Activated CD4-positive, alpha-beta T cell treated with anti-CD3 and anti-CD28 coated beads for 36 hours (primary cell): ENCODE measurements at regions of chr2 and their contacts with region 1.

Region 1: DNA sequence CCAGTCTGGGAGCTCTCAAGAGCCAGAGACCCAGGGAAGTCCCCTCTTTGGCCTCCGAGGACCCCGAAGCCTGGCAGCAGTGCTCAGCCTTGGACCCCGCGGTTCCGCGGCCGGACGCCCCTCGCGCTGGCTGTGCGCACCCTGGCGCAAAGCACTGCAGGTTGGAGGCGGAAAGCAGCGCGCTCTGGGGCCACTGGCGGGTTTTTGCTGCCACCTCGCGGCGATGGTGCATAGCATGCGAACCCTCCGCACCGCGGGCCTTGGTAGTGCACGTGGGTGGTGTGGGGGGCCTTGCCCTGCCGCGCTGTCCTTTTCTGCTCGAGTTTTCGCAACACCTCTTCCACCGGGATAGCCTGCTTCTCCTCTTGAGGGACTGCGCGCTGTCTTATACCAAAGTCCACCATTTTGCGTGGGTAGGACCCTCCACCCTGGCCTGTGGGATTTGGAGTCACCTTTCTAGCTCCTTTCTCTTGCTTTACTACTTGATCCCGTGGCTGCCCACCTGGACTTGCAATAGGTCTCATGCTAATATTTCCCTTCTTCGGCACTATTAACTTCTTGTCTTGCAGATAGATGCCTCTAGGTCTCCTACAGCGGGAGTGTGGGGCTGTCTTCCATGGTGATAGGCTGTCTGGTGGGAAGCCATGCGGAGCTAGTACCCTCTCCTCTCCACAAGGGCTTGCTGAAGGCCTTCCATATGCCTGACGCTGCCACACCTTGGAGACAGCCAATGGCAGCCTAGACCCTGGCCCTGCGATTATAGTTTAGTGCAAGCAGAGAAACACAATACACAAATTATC is 14.3 kb downstream of the SIX3 start:
- DNase-seq: peak; percentile 90
- ATAC-seq: peak; percentile 77
- H3K4me3 Mint-ChIP-seq: peak overlapping the region; percentile 54
- H3K27ac Mint-ChIP-seq: no peak overlapping the region
- H3K4me1 Mint-ChIP-seq: peaks cover 14% of the 10 kb centered on the region
- H3K27me3 Mint-ChIP-seq: peaks cover 51% of the 10 kb centered on the region

Region 2: GRCh38 chr2:44044281-44044720 is 911.5 kb before region 1 on chr2:
- CTCF ChIA-PET with region 1: interaction called, 11 read pairs
- POLR2A ChIA-PET with region 1: no interaction called
- intact Hi-C with region 1: loop called (anchors 1 to 5 kb)
- DNase-seq: peak; percentile 91
- ATAC-seq: peak; percentile 100
- H3K4me3 Mint-ChIP-seq: no peak overlapping the region
- H3K27ac Mint-ChIP-seq: no peak overlapping the region
- H3K4me1 Mint-ChIP-seq: no peaks in the 10 kb centered on the region
- H3K27me3 Mint-ChIP-seq: peaks cover 2% of the 10 kb centered on the region

Region 3: GRCh38 chr2:44244129-44244871 is 711.5 kb before region 1 on chr2:
- CTCF ChIA-PET with region 1: interaction called, 11 read pairs
- POLR2A ChIA-PET with region 1: no interaction called
- intact Hi-C with region 1: loop called (anchors 1 to 5 kb)
- DNase-seq: peak; percentile 73
- ATAC-seq: peak; percentile 86
- H3K4me3 Mint-ChIP-seq: peak overlapping the region; percentile 67
- H3K27ac Mint-ChIP-seq: peak overlapping the region; percentile 47
- H3K4me1 Mint-ChIP-seq: peaks cover 16% of the 10 kb centered on the region
- H3K27me3 Mint-ChIP-seq: no peaks in the 10 kb centered on the region

Region 4: GRCh38 chr2:44479122-44479887 is 476.5 kb before region 1 on chr2:
- CTCF ChIA-PET with region 1: interaction called, 93 read pairs
- POLR2A ChIA-PET with region 1: no interaction called
- intact Hi-C with region 1: loop called (anchors 1 kb)
- DNase-seq: peak; percentile 39
- ATAC-seq: peak; percentile 100
- H3K4me3 Mint-ChIP-seq: no peak overlapping the region
- H3K27ac Mint-ChIP-seq: no peak overlapping the region
- H3K4me1 Mint-ChIP-seq: peaks cover 9% of the 10 kb centered on the region
- H3K27me3 Mint-ChIP-seq: no peaks in the 10 kb centered on the region

Region 5: DNA sequence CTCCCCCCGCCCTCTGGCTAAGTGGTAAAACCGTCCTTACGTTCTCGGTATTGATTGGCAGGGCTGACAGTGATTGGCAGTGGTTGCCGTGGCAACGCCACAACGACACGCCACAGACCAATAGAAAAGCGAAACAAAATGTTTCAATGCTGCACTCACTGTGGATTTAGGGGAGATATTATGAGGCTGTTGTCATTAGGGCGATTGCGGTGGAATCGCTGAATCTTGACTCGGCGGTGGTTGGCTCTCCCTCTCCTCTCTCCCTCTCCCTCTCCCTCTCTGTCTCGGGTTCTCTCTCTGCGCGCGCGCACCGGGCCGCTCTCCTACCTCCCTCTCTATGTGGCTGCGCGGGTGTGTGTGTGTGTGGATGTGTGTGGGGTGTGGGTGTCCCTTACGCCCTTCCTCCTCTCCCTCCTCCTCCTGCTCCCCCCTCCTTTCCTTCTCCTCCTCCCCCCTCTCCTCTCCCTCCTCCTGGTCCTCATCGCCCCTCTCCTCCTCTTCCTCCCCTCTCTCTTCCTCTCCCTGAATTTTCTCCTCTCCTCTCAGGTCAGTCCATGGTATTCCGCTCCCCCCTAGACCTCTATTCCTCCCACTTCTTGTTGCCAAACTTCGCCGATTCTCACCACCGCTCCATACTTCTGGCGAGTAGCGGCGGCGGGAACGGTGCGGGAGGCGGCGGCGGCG is 14.1 kb before region 1 on chr2 and contains the start of gene SIX3:
- CTCF ChIA-PET with region 1: interaction called, 30 read pairs
- POLR2A ChIA-PET with region 1: no interaction called
- intact Hi-C with region 1: loop called in 1 of 2 experiments (anchors 1 kb)
- DNase-seq: peak; percentile 74
- ATAC-seq: peak; percentile 69
- H3K4me3 Mint-ChIP-seq: peak within 1 kb of the TSS; percentile 70
- H3K27ac Mint-ChIP-seq: no peak within 1 kb of the TSS
- H3K4me1 Mint-ChIP-seq: peaks cover 37% of the 10 kb centered on the region
- H3K27me3 Mint-ChIP-seq: peaks cover 76% of the 10 kb centered on the region
- total RNA-seq, gene SIX3: not detected

Region 6: DNA sequence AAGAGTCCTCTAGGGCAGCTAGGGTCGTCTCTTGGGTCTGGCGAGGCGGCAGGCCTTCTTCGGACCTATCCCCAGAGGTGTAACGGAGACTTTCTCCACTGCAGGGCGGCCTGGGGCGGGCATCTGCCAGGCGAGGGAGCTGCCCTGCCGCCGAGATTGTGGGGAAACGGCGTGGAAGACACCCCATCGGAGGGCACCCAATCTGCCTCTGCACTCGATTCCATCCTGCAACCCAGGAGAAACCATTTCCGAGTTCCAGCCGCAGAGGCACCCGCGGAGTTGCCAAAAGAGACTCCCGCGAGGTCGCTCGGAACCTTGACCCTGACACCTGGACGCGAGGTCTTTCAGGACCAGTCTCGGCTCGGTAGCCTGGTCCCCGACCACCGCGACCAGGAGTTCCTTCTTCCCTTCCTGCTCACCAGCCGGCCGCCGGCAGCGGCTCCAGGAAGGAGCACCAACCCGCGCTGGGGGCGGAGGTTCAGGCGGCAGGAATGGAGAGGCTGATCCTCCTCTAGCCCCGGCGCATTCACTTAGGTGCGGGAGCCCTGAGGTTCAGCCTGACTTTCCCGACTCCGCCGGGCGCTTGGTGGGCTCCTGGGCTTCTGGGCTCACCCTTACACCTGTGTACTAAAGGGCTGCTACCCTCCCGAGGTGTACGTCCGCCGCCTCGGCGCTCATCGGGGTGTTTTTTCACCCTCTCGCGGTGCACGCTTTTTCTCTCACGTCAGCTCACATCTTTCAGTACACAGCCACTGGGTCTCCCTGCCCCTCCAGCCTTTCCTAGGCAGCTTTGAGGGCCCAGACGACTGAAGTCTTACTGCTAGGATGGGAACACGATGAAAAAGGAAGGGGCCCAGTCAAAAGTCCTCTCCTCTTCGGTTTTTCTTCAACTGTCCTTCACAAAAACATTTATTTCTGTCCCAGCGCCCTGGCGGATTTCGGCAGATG is 45.4 kb after region 1 on chr2:
- CTCF ChIA-PET with region 1: no interaction called
- POLR2A ChIA-PET with region 1: no interaction called
- intact Hi-C with region 1: loop called in 1 of 2 experiments (anchors 5 kb)
- DNase-seq: peak; percentile 27
- ATAC-seq: no peak
- H3K4me3 Mint-ChIP-seq: peak overlapping the region; percentile 47
- H3K27ac Mint-ChIP-seq: no peak overlapping the region
- H3K4me1 Mint-ChIP-seq: peaks cover 20% of the 10 kb centered on the region
- H3K27me3 Mint-ChIP-seq: peaks cover 75% of the 10 kb centered on the region

Region 7: DNA sequence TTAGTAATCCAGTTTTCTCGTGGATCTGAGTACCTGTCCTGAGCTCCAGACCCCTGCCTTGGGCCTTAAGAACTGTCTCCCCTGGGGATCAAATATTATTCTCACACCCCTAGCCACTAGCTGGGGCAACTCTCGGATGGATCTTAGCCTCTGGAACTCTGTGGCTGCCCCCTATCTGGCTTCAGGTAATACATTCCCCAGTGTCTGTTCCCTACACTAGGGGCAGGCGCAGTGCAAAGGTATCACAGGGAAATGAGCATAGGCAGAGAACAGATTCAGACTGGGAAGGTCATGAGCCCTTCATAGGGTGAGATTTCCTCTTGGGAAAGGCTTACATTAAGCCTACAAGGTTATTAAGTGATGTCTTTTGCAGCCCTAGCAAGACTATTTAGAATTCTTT is 64.6 kb after region 1 on chr2:
- CTCF ChIA-PET with region 1: no interaction called
- POLR2A ChIA-PET with region 1: no interaction called
- intact Hi-C with region 1: no loop called
- DNase-seq: no peak
- ATAC-seq: no peak
- H3K4me3 Mint-ChIP-seq: no peak overlapping the region
- H3K27ac Mint-ChIP-seq: no peak overlapping the region
- H3K4me1 Mint-ChIP-seq: no peaks in the 10 kb centered on the region
- H3K27me3 Mint-ChIP-seq: peaks cover 35% of the 10 kb centered on the region